Mammary epithelial cell (primary cell): ENCODE measurements at regions of chr16 and their contacts with region 1.

Region 1: GRCh38 chr16:1278477-1278876 is 22.6 kb downstream of the TPSD1 start:
- DNase-seq: no peak
- H3K4me3 ChIP-seq: no peak overlapping the region
- H3K27ac ChIP-seq: no peak overlapping the region
- H3K4me1 ChIP-seq: no peaks in the 10 kb centered on the region
- H3K27me3 ChIP-seq: peaks cover 4% of the 10 kb centered on the region
- CTCF ChIP-seq: no peak

Region 2: DNA sequence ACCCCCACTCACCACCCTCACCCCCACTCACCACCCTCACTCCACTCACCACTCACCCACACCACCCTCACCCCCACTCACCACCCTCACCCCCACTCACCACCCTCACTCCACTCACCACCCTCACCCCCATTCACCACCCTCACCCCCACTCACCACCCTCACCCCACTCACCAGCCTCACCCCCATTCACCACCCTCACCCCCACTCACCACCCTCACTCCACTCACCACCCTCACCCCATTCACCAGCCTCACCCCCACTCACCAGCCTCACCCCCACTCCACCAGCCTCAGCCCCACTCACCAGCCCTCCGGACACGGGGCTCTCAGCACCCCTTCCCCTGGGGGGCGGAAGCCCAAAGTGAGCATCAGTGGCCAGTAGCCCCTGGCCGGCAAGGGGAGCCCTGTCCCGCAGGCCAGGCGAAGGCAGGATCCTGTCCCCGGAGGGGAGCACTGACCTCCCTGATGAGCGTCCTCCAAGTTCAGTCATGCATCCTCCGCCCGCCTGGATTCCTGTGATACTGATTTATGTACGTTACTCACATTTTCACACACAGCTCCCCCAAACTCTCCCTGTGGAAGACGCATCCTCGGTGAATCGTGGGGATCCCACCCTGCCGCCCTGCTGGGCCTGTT is 164.5 kb before region 1 on chr16:
- CTCF ChIA-PET with region 1: no interaction called
- dilution Hi-C with region 1: loop called (anchors 5 kb)
- in situ Hi-C with region 1: no loop called
- intact Hi-C with region 1: no loop called
- DNase-seq: no peak
- H3K4me3 ChIP-seq: no peak overlapping the region
- H3K27ac ChIP-seq: no peak overlapping the region
- H3K4me1 ChIP-seq: peaks cover 3% of the 10 kb centered on the region
- H3K27me3 ChIP-seq: peaks cover 6% of the 10 kb centered on the region
- CTCF ChIP-seq: no peak

Region 3: DNA sequence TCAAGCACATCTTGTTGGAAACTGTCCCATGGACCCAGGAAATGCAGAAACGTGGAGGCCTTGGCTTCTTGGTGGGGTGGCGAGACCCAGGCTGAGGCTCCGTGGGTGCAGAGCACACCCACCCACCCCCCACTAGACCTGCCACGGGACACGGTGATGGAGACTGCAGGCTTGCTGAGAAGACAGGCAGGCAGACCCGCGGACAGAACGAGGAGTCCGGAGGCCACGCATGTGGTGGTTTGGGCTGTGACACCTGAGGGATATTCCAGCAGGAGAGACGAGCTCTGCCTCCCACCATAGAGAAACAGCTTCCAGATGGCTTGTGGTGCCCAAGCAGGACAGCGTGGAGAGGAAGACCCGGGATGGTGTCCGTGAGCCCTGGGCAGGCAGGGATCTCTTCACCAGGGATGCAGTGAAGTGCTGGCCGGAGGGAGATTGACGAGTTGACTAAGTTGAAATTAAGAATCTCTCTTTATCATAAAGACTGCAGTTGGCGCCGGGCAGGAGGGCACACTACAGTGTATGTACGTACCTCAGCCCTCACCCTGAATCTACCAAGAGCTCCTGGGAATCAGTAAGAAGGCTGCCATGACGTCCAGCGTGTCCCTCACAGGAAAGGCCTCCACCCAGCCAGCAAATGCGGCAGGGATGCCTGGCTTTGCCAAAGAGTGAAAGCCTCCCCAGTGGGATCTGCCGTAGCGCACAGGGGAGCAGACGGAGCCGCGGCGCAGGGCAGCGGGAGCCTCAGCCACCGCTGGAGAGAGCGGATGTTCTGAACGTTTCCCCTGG is 39.2 kb after region 1 on chr16:
- CTCF ChIA-PET with region 1: no interaction called
- dilution Hi-C with region 1: loop called (anchors 5 kb)
- in situ Hi-C with region 1: no loop called
- intact Hi-C with region 1: no loop called
- DNase-seq: no peak
- H3K4me3 ChIP-seq: no peak overlapping the region
- H3K27ac ChIP-seq: no peak overlapping the region
- H3K4me1 ChIP-seq: peaks cover 4% of the 10 kb centered on the region
- H3K27me3 ChIP-seq: no peaks in the 10 kb centered on the region
- CTCF ChIP-seq: no peak

Region 4: GRCh38 chr16:1635070-1635469 is 356.6 kb after region 1 on chr16:
- CTCF ChIA-PET with region 1: no interaction called
- dilution Hi-C with region 1: loop called (anchors 5 kb)
- in situ Hi-C with region 1: no loop called
- intact Hi-C with region 1: no loop called
- DNase-seq: no peak
- H3K4me3 ChIP-seq: no peak overlapping the region
- H3K27ac ChIP-seq: no peak overlapping the region
- H3K4me1 ChIP-seq: no peaks in the 10 kb centered on the region
- H3K27me3 ChIP-seq: no peaks in the 10 kb centered on the region
- CTCF ChIP-seq: no peak